A549 (cell line): ENCODE measurements at regions of chr2 and their contacts with region 1.

Region 1: GRCh38 chr2:119702918-119703401 is 24.0 kb downstream of the TMEM177 start:
- DNase-seq: peak; percentile 64 to 70
- ATAC-seq: peak; percentile 99
- H3K4me3 ChIP-seq: no peak overlapping the region
- H3K27ac ChIP-seq: peak overlapping the region; percentile 30 to 58; a peak in 3 of 6 replicates
- H3K4me1 ChIP-seq: 0 out of 3 replicates have a peak, but pooled peaks cover 4% of the 10 kb centered on the region
- CTCF ChIP-seq: peak; percentile 93
- EP300 ChIP-seq: no peak
- POLR2A ChIP-seq: no peak
- RAD21 ChIP-seq: peak; percentile 93 to 95

Region 2: DNA sequence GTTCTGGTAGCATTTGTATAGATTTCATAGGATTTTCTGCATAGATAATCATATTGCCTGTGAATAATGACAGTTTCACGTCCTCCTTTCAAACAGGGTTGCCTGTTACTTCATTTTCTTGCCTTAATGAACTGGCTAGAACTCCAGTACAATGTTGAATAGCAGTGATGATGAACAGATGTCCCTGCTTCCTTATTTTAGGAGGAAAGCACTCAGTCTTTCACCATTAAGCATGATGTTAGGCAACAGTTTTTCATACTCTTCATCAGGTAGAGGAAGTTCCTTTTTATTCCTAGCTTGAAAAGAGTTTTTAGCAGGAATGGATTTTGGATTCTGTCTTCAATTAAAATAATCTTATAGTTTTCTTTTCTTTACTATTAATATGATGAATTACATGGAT is 376.0 kb before region 1 on chr2:
- CTCF ChIA-PET with region 1: no interaction called
- POLR2A ChIA-PET with region 1: no interaction called
- DNase-seq: no peak
- ATAC-seq: no peak
- H3K4me3 ChIP-seq: no peak overlapping the region
- H3K27ac ChIP-seq: no peak overlapping the region
- H3K4me1 ChIP-seq: no peaks in the 10 kb centered on the region
- CTCF ChIP-seq: no peak
- EP300 ChIP-seq: no peak
- POLR2A ChIP-seq: no peak
- RAD21 ChIP-seq: no peak

Region 3: GRCh38 chr2:119746836-119747686 is 44.1 kb after region 1 on chr2:
- CTCF ChIA-PET with region 1: interaction called, 16 read pairs
- POLR2A ChIA-PET with region 1: no interaction called
- DNase-seq: peak in 1 of 2 experiments; percentile 29
- ATAC-seq: peak; percentile 31 to 39; a peak in 3 of 6 replicates
- H3K4me3 ChIP-seq: no peak overlapping the region
- H3K27ac ChIP-seq: peak overlapping the region in 1 of 2 experiments; percentile 27; a peak in 3 of 6 replicates
- H3K4me1 ChIP-seq: peaks cover 51% of the 10 kb centered on the region
- CTCF ChIP-seq: no peak
- EP300 ChIP-seq: no peak
- POLR2A ChIP-seq: no peak
- RAD21 ChIP-seq: no peak

Region 4: DNA sequence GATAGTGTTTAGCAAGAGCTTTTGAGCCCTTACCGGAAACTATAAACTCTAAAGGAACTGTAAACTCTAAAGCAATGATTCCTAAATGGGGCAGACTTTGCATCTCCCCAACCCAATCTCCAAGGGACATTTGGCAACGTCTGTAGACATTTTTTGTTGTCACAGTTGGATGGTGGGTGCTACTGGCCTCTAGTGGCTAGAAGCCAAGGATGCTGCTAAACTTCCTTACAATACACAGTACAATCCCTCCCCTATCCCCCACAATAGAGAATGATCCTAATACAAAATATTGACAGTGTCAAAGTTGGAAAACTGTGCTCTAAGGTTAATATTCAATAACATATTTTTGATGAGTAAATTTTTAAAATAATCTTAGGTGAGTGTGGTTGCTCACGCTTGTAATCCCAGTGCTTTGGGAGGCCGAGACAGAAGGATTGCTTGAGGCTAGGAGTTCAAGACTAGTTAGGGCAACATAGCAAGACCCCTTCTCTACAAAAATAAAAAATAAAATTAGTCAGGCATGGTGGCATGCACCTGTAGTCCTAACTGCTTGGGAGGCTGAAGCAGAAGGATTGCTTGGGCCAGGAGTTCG is 123.5 kb after region 1 on chr2:
- CTCF ChIA-PET with region 1: interaction called, 35 read pairs
- POLR2A ChIA-PET with region 1: no interaction called
- DNase-seq: peak; percentile 16 to 52
- ATAC-seq: peak; percentile 76 to 91; a peak in 5 of 6 replicates
- H3K4me3 ChIP-seq: no peak overlapping the region
- H3K27ac ChIP-seq: no peak overlapping the region
- H3K4me1 ChIP-seq: peaks cover 11% of the 10 kb centered on the region; the same call in 1 of the 3 replicates
- CTCF ChIP-seq: peak; percentile 63
- EP300 ChIP-seq: no peak
- POLR2A ChIP-seq: no peak
- RAD21 ChIP-seq: peak; percentile 48 to 65; a peak in 4 of 5 replicates

Region 5: GRCh38 chr2:119914266-119914665 is 211.3 kb after region 1 on chr2:
- CTCF ChIA-PET with region 1: no interaction called
- POLR2A ChIA-PET with region 1: no interaction called
- DNase-seq: no peak
- ATAC-seq: no peak
- H3K4me3 ChIP-seq: no peak overlapping the region
- H3K27ac ChIP-seq: no peak overlapping the region
- H3K4me1 ChIP-seq: no peaks in the 10 kb centered on the region
- CTCF ChIP-seq: no peak
- EP300 ChIP-seq: no peak
- POLR2A ChIP-seq: no peak
- RAD21 ChIP-seq: no peak